ENCODE measurements at regions of chr5 and their contacts with region 1.

Region 1: GRCh38 chr5:147576646-147577535 is 67.0 kb upstream of the DPYSL3 start:
- DNase-seq: peak; percentile 68
- ATAC-seq: peak; percentile 44
- H3K4me3 Mint-ChIP-seq: no peak overlapping the region
- H3K27ac Mint-ChIP-seq: no peak overlapping the region
- H3K4me1 Mint-ChIP-seq: no peaks in the 10 kb centered on the region
- H3K27me3 Mint-ChIP-seq: peaks cover 4% of the 10 kb centered on the region

Region 2: DNA sequence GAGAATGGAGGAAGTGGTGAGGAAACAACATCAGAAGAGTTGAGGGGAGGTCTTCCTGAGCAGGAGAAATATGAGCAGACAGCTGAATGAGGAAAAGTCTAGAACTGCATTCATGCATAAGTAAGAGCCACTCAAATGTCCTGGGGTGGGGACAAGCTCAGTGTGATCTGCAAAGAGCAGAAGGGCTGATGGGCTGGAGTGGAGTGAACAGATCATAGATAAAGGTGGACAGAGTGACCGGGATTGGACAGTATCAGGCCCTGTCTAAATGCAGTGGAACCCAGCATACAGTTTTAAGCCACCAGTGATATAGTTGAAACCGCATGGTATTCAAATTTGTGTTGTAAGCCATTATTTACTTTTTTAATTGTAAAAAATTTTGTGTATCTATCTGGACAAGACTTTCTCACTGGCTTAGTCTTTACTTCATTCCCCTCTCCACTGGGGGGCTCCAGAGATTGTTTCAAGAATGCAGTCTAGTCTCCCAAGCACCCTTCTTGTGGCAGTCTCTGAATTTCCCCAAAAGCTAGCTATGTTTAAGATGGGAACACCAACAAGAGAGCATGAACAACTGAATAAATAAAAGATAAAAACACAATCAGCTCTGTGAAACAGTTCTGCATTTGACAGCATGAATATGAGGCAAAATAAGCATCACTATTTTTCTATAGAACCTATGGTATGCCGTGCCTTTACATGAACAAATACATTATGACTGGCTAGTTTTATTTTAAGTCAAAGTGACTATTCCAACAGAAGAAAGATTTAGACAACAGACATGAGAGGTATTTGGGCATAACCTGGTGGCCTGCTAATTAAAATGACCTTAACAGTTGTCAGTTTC is 352.7 kb before region 1 on chr5:
- CTCF ChIA-PET with region 1: no interaction called
- POLR2A ChIA-PET with region 1: no interaction called
- intact Hi-C with region 1: loop called in 1 of 2 experiments (anchors 10 kb)
- DNase-seq: no peak
- ATAC-seq: no peak
- H3K4me3 Mint-ChIP-seq: no peak overlapping the region
- H3K27ac Mint-ChIP-seq: no peak overlapping the region
- H3K4me1 Mint-ChIP-seq: peaks cover 3% of the 10 kb centered on the region
- H3K27me3 Mint-ChIP-seq: no peaks in the 10 kb centered on the region

Region 3: DNA sequence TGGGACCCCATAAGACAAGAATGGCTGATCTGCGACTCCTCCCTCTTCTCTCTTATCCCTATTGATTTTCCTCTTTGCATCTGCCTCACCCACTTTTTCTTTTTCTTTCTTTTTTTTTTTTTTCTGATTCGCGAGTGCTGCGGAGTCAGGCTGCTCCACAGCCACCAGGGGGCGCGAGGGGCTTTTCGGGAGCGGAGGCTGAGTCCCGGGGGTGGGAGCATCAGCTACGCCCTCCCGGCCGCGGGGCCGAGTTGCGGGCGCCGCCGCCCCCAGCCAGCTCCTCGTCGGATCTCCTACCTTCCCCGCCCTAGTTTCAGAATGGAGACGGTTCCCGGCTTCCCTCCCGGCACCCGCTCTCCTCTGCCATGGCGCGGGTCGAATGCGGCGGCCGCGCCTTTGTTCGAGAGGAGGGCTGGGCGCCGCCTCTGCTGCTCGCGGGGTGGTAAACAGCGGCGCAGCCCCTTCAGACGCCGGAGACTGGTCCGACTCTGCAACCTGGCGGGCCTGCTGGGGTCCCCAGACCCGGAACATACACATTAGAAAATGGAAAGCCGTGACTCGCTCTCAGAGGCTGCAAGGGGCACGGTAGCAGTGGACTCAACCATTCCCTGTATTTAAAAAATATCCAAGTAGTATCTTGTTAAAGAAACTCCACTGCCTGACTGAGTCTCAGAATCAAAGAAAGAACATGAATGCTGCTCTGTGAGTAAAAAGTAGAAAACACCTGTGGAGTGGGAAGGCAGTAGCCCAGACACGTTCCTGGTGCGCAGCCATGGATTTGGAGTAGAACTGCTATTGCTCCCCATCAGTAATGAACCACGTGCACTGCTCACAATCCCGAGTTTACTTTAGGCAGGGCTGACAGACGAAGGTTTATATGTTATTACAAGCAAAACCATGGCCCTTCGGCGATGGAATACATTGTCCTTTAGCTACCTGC is 122.7 kb before region 1 on chr5:
- CTCF ChIA-PET with region 1: no interaction called
- POLR2A ChIA-PET with region 1: no interaction called
- intact Hi-C with region 1: loop called (anchors 1 to 5 kb)
- DNase-seq: peak; percentile 85
- ATAC-seq: peak; percentile 82
- H3K4me3 Mint-ChIP-seq: peak overlapping the region; percentile 69
- H3K27ac Mint-ChIP-seq: no peak overlapping the region
- H3K4me1 Mint-ChIP-seq: peaks cover 9% of the 10 kb centered on the region
- H3K27me3 Mint-ChIP-seq: peaks cover 72% of the 10 kb centered on the region

Region 4: DNA sequence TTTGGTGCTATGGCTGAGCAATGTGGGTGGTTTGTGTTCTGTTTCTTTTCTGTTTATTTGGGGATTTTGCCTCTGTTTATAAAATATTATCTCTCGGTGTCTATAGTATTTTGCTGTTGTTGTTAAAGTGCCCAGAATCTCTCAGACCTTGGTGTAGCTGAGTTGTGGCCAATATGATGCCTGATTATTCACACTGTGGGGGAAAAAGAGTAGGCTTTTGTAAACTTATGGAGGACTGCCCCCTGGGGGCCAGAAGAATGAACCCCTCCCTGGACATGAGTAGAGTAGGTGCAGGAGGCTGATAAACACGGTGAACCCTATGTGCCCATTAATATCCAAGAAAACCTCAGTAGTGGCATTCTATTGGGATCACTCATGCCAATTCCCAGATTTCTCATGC is 18.1 kb before region 1 on chr5:
- CTCF ChIA-PET with region 1: interaction called, 10 read pairs
- POLR2A ChIA-PET with region 1: no interaction called
- intact Hi-C with region 1: no loop called
- DNase-seq: peak; percentile 18
- ATAC-seq: no peak
- H3K4me3 Mint-ChIP-seq: no peak overlapping the region
- H3K27ac Mint-ChIP-seq: no peak overlapping the region
- H3K4me1 Mint-ChIP-seq: no peaks in the 10 kb centered on the region
- H3K27me3 Mint-ChIP-seq: peaks cover 3% of the 10 kb centered on the region